ENCODE measurements at regions of chr3 and their contacts with region 1.

Region 1: DNA sequence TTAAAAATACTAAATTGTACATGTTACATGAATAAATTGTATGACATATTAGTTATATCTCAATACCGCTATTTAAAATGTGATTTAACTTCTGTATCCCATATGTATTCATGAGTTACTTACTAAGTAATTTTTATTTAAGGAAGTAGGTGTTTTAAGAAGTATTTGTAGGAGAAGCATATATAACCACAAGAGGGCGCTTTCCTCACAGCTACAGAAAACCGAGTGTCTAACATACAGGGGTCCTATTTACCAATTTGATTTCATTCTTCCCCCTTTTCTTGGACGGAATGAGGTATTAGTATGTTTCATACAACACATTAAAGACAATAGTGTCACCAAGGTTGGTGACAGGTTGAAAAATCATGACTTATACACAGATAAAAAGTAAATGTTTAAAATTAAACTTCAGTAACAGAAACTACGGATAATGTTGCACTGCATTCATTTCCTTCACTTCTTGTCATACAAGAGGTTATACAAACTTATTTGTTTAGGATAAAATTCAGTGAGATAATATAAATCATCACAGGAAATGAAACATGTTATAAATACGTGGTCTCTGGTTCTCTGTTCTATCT is 253.6 kb downstream of the MAGI1 start:
- DNase-seq: peak in 1 of 2 donors; percentile 13
- ATAC-seq: peak in 3 of 8 donors; percentile 20 to 55 (median 34)
- H3K4me3 ChIP-seq: no peak overlapping the region
- H3K27ac ChIP-seq: no peak overlapping the region
- H3K4me1 ChIP-seq: peaks cover 3 to 42% (median 17%) of the 10 kb centered on the region in 9 donors
- H3K27me3 ChIP-seq: no peaks in the 10 kb centered on the region
- CTCF ChIP-seq: peak; percentile 65 to 89 (median 80)

Region 2: DNA sequence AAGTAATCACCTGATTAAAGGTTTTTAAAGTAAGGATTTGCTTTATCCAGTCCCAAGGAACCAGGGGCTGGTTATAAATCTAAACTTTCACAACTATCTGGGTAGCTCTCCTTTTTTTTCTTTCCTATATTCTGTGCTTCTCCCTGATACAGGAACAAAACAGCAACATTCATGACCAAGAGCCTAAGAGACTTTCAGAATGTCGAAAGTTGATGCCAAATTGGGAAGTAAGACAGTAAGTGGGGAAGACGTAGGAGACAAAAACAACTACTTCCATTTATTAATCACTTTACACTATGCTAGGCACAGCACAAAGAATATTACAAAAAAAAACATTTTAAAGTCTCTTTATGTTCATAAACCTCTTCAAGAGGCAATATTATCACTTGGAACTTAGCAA is 41.9 kb after region 1 on chr3:
- intact Hi-C with region 1: no loop called
- DNase-seq: no peak
- ATAC-seq: no peak
- H3K4me3 ChIP-seq: no peak overlapping the region
- H3K27ac ChIP-seq: no peak overlapping the region
- H3K4me1 ChIP-seq: peaks cover 0 to 56% (median 45%) of the 10 kb centered on the region in 9 donors
- H3K27me3 ChIP-seq: no peaks in the 10 kb centered on the region
- CTCF ChIP-seq: no peak

Region 3: DNA sequence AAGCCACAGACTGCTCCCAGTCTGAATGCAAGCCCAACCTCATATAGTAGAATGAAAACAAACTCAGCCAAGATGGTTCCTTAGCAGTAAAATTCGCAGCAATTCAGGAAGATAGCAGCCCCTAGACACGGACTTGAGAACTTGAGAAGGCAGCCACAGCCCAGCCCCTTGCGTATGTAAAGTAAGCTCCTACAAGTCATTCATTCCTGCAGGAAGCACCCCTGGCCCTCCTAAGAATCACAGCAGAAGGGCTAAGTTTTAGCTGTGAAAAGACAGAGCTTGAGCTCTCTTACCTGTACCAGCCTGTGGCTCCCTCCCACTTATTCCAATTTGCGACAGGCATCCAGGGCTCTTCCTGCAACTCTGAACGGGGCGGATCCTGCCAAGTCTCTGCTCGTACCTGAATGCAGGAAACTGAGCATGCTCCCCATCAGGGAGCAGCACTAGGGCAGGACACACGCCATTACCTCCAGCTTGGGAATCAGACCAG is 117.2 kb after region 1 on chr3:
- intact Hi-C with region 1: loop called in 3 of 10 experiments (anchors 10 kb)
- DNase-seq: no peak
- ATAC-seq: no peak
- H3K4me3 ChIP-seq: no peak overlapping the region
- H3K27ac ChIP-seq: no peak overlapping the region
- H3K4me1 ChIP-seq: peaks cover 0 to 55% (median 17%) of the 10 kb centered on the region in 9 donors
- H3K27me3 ChIP-seq: no peaks in the 10 kb centered on the region
- CTCF ChIP-seq: no peak

Region 4: DNA sequence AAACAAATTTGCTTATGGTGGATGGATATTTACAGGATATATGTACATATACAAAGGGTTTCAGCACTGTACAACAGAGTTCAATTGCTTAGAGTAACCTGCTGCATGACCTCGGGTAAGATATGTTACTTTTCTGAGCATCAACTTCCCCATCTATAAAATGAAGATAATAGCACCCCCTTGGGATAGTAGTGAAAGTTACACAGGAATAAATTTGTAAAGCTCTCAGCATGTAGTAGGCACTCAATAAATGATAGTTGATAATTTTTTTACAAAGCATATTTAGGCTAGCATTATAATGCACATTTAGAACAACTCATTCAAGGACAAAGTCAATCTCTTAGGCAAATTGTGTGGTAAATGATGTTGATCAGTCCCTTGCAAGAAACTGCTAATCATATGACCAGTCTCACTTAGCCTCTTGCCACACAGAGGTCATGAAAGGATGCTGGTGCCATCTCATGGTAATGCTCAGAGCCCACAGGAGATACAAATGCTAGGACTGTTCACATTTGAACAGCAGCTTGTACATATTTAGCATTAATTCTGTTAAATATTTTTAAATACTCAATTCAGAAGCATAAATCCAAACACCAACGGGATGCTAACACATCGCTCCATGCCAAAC is 129.7 kb after region 1 on chr3:
- intact Hi-C with region 1: loop called in 2 of 10 experiments (anchors 5 to 10 kb)
- DNase-seq: no peak
- ATAC-seq: peak in 1 of 8 donors; percentile 29
- H3K4me3 ChIP-seq: no peak overlapping the region
- H3K27ac ChIP-seq: no peak overlapping the region
- H3K4me1 ChIP-seq: peaks cover 0 to 57% (median 18%) of the 10 kb centered on the region in 9 donors
- H3K27me3 ChIP-seq: no peaks in the 10 kb centered on the region
- CTCF ChIP-seq: no peak

Region 5: DNA sequence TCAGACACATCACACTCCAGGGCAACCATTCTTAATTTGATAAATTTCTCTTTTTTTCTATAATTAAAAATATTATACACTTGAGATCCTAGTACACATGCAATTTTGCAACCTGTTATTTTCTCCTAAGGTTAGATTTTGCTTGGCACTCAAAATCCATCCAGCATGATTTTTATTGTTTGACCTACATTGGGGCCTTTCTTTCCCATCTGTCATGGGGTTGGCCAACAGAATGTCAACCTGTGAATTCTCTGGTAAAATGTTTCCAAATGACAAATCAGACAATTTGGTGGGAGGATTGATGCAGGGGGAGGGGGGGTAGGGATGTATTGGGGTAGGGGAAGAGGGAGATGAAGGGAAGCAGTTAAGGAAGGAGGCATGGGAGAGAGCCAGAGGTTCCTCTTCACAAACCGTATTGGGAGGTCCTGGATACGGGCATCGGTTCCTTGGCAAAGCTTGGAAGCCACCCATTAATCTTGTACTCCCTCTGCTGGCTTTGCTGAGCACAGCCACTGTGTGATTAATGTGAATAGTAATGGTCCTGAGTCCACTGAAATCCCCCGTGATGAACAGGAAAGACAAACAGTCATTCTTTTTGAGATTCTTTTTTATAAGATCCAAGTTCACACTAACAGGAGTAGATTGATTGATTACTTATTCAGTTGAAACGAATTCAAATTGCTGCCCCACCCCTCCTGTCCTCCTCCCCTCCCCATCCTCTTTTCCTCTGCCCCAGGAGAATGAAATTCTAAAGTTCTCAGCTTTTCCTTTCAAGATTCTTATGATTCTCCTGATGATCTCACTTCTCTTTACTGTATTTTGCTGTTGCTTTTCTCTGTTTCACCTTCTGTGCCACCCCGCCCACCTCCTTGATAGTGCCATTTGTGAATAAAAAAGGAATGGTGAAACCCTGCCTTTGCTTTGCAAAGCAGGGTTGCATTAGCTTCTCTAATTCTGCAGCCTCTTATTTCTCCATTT is 353.5 kb after region 1 on chr3:
- intact Hi-C with region 1: loop called (anchors 1 to 5 kb)
- DNase-seq: peak in 1 of 2 donors; percentile 65
- ATAC-seq: peak; percentile 79 to 94 (median 88)
- H3K4me3 ChIP-seq: no peak overlapping the region
- H3K27ac ChIP-seq: peak overlapping the region in 3 of 10 donors; percentile 46 to 52 (median 51)
- H3K4me1 ChIP-seq: peaks cover 0 to 10% (median 9%) of the 10 kb centered on the region in 9 donors
- H3K27me3 ChIP-seq: no peaks in the 10 kb centered on the region
- CTCF ChIP-seq: peak; percentile 68 to 88 (median 82)

Region 6: DNA sequence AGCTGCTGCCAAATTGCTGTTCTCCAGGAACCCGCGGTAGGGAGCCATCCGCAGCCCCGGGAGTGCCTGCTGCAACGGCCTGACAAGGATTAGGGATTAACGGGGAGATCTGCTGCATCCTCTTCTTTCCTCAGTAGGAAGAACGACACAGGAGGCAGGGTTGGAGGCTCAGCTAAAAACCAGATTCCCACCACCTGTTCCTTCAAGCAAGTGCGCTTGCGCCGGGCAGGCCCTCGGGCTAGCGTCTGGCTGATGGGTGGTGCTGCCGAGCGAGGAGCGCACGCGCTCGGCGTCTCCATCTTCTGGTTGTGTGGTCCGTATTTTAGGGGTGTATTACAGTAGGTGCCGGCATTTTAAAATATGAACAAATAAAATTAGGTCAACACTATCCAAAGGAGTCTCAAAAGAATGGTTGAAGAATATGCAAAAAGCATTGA is 410.2 kb after region 1 on chr3:
- intact Hi-C with region 1: loop called in 9 of 10 experiments (anchors 2 to 10 kb)
- DNase-seq: peak; percentile 50 to 57
- ATAC-seq: peak; percentile 70 to 87 (median 80)
- H3K4me3 ChIP-seq: peak overlapping the region; percentile 4 to 52 (median 30)
- H3K27ac ChIP-seq: peak overlapping the region in 7 of 10 donors; percentile 65 to 85 (median 74)
- H3K4me1 ChIP-seq: peaks cover 0 to 12% (median 0%) of the 10 kb centered on the region in 9 donors
- H3K27me3 ChIP-seq: peaks cover 0 to 18% (median 0%) of the 10 kb centered on the region in 7 donors
- CTCF ChIP-seq: peak in 6 of 9 donors; percentile 19 to 45 (median 32)

Measured in heart right ventricle (tissue), 16 donors.